Left cardiac atrium (tissue), 4 donors: ENCODE measurements at regions of chr4 and their contacts with region 1.

Region 1: DNA sequence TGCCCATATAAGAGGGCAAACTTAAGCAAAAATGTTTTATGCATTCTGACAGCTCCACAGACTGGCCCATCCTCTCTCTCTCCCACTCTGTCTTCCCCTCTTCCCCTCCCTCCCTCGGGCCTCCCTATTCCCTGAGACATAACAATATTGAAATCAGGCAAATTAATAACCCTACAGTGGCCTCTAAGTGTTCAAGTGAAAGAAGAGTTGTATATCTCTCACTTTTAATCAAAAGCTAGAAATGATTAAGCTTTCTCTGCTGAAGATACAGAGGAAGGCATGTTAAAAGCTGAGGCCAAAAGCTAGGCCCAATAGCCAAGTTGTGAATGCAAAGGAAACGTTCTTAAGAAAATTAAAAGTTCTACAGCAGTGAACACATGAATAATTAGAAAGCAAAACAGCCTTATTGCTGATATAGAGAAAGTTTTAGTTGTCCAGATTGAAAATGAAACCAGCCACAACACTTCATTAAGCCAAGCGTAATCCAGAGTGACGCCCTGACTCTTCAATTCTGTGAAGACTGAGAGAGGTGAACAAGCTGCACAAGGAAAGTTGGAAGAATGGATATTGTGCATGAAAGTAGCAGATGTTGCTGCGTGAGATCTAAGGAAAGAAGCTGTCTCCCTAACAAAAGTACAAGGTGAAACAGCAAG is 54.9 kb downstream of the USO1 start:
- DNase-seq: no peak
- ATAC-seq: no peak

Region 2: DNA sequence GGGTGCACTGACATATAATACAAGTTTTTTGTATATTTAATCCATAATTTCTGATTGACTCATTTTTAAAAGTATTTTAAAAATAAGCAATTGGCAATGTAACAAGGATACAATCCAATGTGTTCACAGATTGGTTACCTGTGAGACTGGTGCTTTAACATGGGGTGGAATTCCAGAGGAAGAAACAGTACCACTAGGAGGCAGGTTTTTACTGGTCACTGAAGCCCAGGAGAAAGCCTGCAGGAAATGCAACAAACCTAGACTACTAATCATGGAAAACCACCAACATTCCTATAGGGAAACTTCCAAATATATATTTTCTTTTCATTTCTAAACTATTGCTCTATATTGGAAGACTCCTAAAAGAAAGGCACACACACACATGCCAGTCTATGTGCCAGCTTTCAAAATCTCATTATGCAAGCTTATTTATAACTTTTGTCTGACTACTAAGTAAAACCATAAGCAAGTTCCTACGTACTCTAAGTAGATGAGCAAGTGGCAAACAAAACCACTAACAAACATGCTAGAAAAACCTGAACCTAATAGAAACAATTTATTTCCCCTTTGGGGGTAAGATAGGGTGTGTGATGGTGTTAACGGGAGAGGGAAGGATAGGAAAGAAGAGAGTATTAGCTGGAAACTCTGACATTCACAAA is 125.3 kb before region 1 on chr4:
- intact Hi-C with region 1: loop called in 1 of 2 experiments (anchors 10 kb)
- DNase-seq: no peak
- ATAC-seq: peak in 1 of 2 donors; percentile 41